PC-3 (cell line): ENCODE measurements at regions of chr6 and their contacts with region 1.

Region 1: GRCh38 chr6:73079978-73080377 is 145.3 kb downstream of the KHDC1L start:
- DNase-seq: peak; percentile 66
- ATAC-seq: peak; percentile 59
- H3K4me3 ChIP-seq: peak overlapping the region; percentile 45; the same call in 1 of the 2 replicates
- H3K27ac ChIP-seq: peak overlapping the region; percentile 100
- H3K4me1 ChIP-seq: peaks cover 54% of the 10 kb centered on the region
- H3K27me3 ChIP-seq: no peaks in the 10 kb centered on the region
- CTCF ChIP-seq: no peak

Region 2: DNA sequence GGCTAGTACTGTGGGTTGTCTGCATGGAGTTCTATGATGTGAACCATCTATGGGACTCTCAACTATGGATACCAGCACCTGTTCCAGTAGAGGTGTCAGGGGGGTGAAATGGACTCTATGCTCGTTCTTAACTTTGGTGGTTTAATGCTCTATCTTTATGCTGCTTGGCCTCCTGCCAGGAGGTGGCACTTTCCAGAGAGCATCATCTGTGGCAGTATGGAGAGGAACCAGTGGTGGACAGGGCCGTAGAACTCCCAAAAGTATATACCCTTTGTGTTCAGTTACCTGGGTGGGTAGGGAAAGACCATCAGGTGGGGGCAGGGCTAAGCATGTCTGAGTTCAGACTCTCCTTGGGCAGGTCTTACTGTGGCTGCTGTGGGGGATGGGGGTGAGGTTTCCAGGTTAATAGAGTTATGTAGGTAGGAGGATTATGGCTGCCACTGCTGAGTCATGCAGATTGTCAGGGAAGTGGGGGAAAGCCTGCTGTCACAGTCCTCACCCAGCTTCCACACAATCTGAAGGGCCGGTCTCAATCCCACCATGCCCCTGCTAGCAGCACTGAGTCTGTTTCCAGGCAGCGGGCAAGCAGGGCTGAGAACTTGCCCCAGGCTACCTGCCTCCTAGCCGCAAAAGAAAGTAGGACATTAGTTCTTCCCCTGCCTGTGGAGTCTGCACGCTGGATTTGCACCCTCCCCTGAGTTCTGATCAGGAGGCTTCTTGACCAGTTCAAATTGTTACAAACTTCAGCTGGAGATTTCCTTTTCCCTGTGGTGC is 174.1 kb before region 1 on chr6:
- CTCF ChIA-PET with region 1: no interaction called
- POLR2A ChIA-PET with region 1: no interaction called
- intact Hi-C with region 1: no loop called
- DNase-seq: no peak
- ATAC-seq: no peak
- H3K4me3 ChIP-seq: no peak overlapping the region
- H3K27ac ChIP-seq: no peak overlapping the region
- H3K4me1 ChIP-seq: no peaks in the 10 kb centered on the region
- H3K27me3 ChIP-seq: no peaks in the 10 kb centered on the region
- CTCF ChIP-seq: no peak

Region 3: GRCh38 chr6:73231986-73232391 is 152.0 kb after region 1 on chr6:
- CTCF ChIA-PET with region 1: no interaction called
- POLR2A ChIA-PET with region 1: no interaction called
- intact Hi-C with region 1: loop called (anchors 5 kb)
- DNase-seq: peak; percentile 55
- ATAC-seq: peak; percentile 26
- H3K4me3 ChIP-seq: no peak overlapping the region
- H3K27ac ChIP-seq: peak overlapping the region; percentile 100
- H3K4me1 ChIP-seq: peaks cover 51% of the 10 kb centered on the region
- H3K27me3 ChIP-seq: no peaks in the 10 kb centered on the region
- CTCF ChIP-seq: no peak

Region 4: DNA sequence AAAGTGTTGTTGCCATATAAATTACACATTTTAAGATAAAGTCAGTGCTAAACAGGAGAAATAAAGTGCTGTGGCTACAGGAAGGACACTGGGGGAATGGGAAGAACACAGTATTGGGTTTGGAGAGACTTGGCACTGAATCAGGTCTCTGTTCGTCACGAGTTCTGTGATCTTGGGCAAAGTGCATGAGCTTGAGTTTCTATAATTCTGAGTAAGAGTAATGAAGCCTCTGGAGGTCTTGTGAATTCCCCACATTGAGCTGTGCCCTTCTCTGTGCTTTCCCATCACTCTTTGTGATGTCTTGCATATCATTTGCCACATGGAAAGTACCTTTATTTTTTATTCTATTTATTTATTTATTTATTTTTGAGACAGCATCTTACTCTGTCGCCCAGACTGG is 457.7 kb after region 1 on chr6:
- CTCF ChIA-PET with region 1: no interaction called
- POLR2A ChIA-PET with region 1: no interaction called
- intact Hi-C with region 1: no loop called
- DNase-seq: no peak
- ATAC-seq: no peak
- H3K4me3 ChIP-seq: no peak overlapping the region
- H3K27ac ChIP-seq: no peak overlapping the region
- H3K4me1 ChIP-seq: no peaks in the 10 kb centered on the region
- H3K27me3 ChIP-seq: no peaks in the 10 kb centered on the region
- CTCF ChIP-seq: no peak